AG04449 (cell line): ENCODE measurements at regions of chr7 and their contacts with region 1.

Region 1: DNA sequence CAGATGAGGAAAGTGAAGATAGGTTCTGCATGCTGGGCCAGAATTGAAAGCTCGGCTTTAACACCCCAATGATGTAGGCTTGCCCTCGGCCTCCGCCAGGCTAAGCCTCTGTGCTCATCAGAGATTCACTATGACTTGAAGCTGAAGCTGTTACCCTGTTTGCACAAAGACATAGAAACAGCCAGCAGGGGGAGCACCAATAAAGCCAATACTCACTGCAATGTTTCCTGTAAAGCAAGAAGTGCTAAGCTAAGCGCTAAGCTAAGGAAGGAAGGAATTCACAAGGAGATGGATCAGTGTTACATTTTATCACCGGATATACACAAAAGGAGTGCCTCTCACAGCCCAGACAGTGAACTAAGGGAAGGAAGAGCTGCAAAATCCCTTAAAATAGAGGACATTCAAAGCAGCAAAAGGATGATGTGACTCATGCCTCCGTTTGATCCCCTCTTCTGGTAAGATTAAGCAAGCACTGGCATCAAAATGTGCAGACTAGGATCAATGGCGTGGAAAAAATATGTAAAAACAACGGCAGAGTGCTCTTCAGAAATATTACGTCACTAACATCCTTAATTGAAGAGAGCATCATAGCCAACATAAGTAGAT is 153.8 kb downstream of the COBL start:
- DNase-seq: peak; percentile 47
- H3K4me3 ChIP-seq: no peak overlapping the region
- CTCF ChIP-seq: peak; percentile 88

Region 2: GRCh38 chr7:50092579-50093491 is 1070.0 kb before region 1 on chr7 and contains the start of gene ZPBP:
- CTCF ChIA-PET with region 1: interaction called, 11 read pairs
- POLR2A ChIA-PET with region 1: no interaction called
- DNase-seq: peak; percentile 0
- H3K4me3 ChIP-seq: no peak within 1 kb of the TSS
- CTCF ChIP-seq: peak; percentile 13

Region 3: GRCh38 chr7:50331564-50332208 is 831.1 kb before region 1 on chr7:
- CTCF ChIA-PET with region 1: no interaction called
- POLR2A ChIA-PET with region 1: no interaction called
- DNase-seq: no peak
- H3K4me3 ChIP-seq: no peak overlapping the region
- CTCF ChIP-seq: no peak

Region 4: GRCh38 chr7:50418086-50418515 is 744.7 kb before region 1 on chr7:
- CTCF ChIA-PET with region 1: interaction called, 12 read pairs
- POLR2A ChIA-PET with region 1: no interaction called
- DNase-seq: peak; percentile 21
- H3K4me3 ChIP-seq: no peak overlapping the region
- CTCF ChIP-seq: peak; percentile 98

Region 5: DNA sequence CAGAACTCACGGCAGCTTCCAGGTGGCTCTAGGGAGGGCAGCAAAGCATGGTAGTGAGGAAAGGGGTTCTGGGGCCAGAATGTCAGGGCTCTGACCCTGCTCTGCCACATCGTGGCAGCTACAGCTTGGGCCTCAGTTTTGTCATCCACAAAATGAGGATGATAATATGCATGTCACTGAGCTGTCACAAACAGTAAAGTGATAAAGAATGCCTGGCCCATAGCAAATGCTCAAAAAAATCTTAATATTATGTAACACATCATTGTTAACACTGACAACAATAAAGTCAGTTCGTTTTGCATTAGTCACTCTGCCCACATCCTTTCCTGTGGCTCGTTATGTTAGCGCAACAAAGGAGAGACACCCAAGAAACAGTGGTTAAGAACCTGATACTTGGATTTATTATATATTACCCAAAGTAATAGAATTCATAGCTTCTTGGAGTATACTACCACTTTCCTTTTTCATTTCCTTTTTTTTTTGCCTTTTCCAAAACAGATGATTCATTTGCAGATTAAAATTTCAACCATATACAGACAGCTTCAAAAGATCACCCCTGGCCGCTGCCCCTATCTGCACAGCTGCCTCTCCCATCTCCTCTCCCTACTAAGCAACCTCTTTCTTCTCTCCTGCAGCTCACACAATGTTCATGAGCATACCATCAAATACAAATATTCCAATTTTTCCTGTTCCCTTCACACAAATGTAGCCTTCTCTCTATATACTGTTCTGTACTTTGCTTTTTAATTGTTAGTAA is 552.1 kb before region 1 on chr7:
- CTCF ChIA-PET with region 1: interaction called, 11 read pairs
- POLR2A ChIA-PET with region 1: no interaction called
- DNase-seq: no peak
- H3K4me3 ChIP-seq: no peak overlapping the region
- CTCF ChIP-seq: no peak

Region 6: GRCh38 chr7:50679218-50680007 is 483.4 kb before region 1 on chr7:
- CTCF ChIA-PET with region 1: interaction called, 14 read pairs
- POLR2A ChIA-PET with region 1: no interaction called
- DNase-seq: no peak
- H3K4me3 ChIP-seq: no peak overlapping the region
- CTCF ChIP-seq: peak; percentile 13

Region 7: GRCh38 chr7:51182636-51183166 is 19.9 kb after region 1 on chr7:
- CTCF ChIA-PET with region 1: interaction called, 21 read pairs
- POLR2A ChIA-PET with region 1: no interaction called
- DNase-seq: no peak
- H3K4me3 ChIP-seq: no peak overlapping the region
- CTCF ChIP-seq: no peak

Region 8: DNA sequence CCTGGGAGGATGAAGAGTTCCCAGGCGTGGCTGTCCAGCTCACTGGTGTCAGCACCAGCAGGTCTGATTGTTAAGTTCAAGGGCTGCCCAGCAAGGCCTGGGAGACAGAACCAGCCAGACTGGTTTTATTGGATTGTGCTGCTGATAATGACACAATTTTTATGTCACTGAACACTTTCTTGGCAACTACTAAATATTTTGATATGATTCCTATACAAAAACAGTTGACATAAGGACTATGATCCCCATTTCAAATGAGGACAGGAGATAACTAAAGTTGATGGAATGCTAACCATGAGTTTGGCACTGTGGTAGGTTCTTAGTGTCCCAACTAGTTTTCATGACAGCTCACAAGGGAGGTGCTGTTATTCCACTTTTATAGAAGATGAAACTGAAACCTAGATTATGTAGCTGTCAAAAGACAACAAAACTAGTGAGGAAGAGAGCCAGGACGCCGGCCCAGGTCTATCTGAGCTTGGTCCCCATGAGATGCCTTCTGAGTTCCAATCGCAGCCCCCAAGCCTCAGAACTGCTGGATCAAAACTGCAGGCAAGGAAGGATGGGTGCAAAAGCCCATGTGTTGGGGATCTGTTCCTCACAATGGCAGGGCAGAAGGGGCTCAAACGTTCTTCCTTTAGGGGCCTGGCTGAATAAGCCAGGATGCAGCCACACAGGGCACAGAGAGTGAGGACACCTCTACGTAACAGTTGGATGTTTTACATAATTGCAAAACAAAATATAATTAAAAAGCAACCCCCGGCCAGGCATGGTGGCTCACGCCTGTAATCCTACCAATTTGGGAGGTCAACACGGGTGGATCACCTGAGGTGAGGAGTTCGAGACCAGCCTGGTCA is 101.0 kb after region 1 on chr7:
- CTCF ChIA-PET with region 1: no interaction called
- POLR2A ChIA-PET with region 1: no interaction called
- DNase-seq: no peak
- H3K4me3 ChIP-seq: no peak overlapping the region
- CTCF ChIP-seq: no peak

Region 9: GRCh38 chr7:51366930-51367613 is 204.2 kb after region 1 on chr7:
- CTCF ChIA-PET with region 1: interaction called, 68 read pairs
- POLR2A ChIA-PET with region 1: no interaction called
- DNase-seq: no peak
- H3K4me3 ChIP-seq: no peak overlapping the region
- CTCF ChIP-seq: peak; percentile 27